Natural killer cell (primary cell): ENCODE measurements at regions of chr11 and their contacts with region 1.

Region 1: GRCh38 chr11:18768472-18768901 is 23.1 kb downstream of the PTPN5 start:
- DNase-seq: no peak
- ATAC-seq: no peak
- H3K4me3 ChIP-seq: no peak overlapping the region
- H3K4me3 Mint-ChIP-seq: no peak overlapping the region
- H3K27ac ChIP-seq: no peak overlapping the region
- H3K27ac Mint-ChIP-seq: no peak overlapping the region
- H3K4me1 ChIP-seq: no peaks in the 10 kb centered on the region
- H3K4me1 Mint-ChIP-seq: no peaks in the 10 kb centered on the region
- H3K27me3 ChIP-seq: no peaks in the 10 kb centered on the region
- H3K27me3 Mint-ChIP-seq: peaks cover 8% of the 10 kb centered on the region in 2 donors
- CTCF ChIP-seq: no peak

Region 2: GRCh38 chr11:18115360-18116127 is 652.9 kb before region 1 on chr11:
- intact Hi-C with region 1: loop called (anchors 1 kb)
- DNase-seq: peak; percentile 38 to 82
- ATAC-seq: peak; percentile 83 to 91 (median 84)
- H3K4me3 ChIP-seq: no peak overlapping the region
- H3K4me3 Mint-ChIP-seq: no peak overlapping the region
- H3K27ac ChIP-seq: no peak overlapping the region
- H3K27ac Mint-ChIP-seq: no peak overlapping the region
- H3K4me1 ChIP-seq: no peaks in the 10 kb centered on the region
- H3K4me1 Mint-ChIP-seq: peaks cover 0 to 5% of the 10 kb centered on the region in 2 donors
- H3K27me3 ChIP-seq: no peaks in the 10 kb centered on the region
- H3K27me3 Mint-ChIP-seq: peaks cover 20 to 41% of the 10 kb centered on the region in 2 donors
- CTCF ChIP-seq: peak; percentile 79

Region 3: DNA sequence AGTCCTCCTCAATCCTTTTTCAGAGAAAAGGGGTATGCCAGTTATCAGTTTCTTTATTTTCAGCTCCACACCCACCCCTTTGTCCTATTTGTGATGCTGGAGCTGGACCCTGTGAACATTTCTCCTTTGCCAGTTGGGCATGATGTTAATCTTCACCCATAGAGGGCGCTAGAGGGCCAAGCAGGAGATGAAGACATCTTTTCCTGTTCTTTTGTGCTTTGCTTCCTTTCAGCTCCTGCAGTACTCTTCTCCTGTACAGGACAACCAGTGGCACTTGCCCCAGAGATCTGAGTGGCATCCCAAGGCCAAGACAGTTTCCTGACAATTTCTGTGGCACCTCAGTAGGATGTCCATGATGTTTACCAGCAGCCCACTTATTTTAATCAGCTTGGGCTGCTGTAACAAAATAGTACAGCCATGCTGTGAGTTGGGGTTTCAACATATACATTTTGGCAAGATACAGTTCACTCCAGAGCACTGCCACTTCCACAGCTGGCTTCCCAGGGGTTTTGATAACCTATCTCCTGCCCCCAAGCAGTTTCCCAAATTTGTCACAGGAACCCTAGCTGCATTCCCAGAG is 524.6 kb before region 1 on chr11:
- intact Hi-C with region 1: loop called (anchors 2 kb)
- DNase-seq: peak; percentile 40 to 85
- ATAC-seq: peak; percentile 58 to 80 (median 76)
- H3K4me3 ChIP-seq: no peak overlapping the region
- H3K4me3 Mint-ChIP-seq: no peak overlapping the region
- H3K27ac ChIP-seq: no peak overlapping the region
- H3K27ac Mint-ChIP-seq: no peak overlapping the region
- H3K4me1 ChIP-seq: no peaks in the 10 kb centered on the region
- H3K4me1 Mint-ChIP-seq: no peaks in the 10 kb centered on the region
- H3K27me3 ChIP-seq: peaks cover 7% of the 10 kb centered on the region
- H3K27me3 Mint-ChIP-seq: peaks cover 22 to 33% of the 10 kb centered on the region in 2 donors
- CTCF ChIP-seq: peak; percentile 90

Region 4: GRCh38 chr11:18540207-18541009 is 228.1 kb before region 1 on chr11:
- intact Hi-C with region 1: loop called (anchors 10 kb)
- DNase-seq: peak in 1 of 2 donors; percentile 70
- ATAC-seq: peak in 2 of 3 donors; percentile 55 to 57
- H3K4me3 ChIP-seq: no peak overlapping the region
- H3K4me3 Mint-ChIP-seq: no peak overlapping the region
- H3K27ac ChIP-seq: no peak overlapping the region
- H3K27ac Mint-ChIP-seq: peak overlapping the region; percentile 11 to 65
- H3K4me1 ChIP-seq: no peaks in the 10 kb centered on the region
- H3K4me1 Mint-ChIP-seq: no peaks in the 10 kb centered on the region
- H3K27me3 ChIP-seq: no peaks in the 10 kb centered on the region
- H3K27me3 Mint-ChIP-seq: no peaks in the 10 kb centered on the region
- CTCF ChIP-seq: peak; percentile 58

Region 5: DNA sequence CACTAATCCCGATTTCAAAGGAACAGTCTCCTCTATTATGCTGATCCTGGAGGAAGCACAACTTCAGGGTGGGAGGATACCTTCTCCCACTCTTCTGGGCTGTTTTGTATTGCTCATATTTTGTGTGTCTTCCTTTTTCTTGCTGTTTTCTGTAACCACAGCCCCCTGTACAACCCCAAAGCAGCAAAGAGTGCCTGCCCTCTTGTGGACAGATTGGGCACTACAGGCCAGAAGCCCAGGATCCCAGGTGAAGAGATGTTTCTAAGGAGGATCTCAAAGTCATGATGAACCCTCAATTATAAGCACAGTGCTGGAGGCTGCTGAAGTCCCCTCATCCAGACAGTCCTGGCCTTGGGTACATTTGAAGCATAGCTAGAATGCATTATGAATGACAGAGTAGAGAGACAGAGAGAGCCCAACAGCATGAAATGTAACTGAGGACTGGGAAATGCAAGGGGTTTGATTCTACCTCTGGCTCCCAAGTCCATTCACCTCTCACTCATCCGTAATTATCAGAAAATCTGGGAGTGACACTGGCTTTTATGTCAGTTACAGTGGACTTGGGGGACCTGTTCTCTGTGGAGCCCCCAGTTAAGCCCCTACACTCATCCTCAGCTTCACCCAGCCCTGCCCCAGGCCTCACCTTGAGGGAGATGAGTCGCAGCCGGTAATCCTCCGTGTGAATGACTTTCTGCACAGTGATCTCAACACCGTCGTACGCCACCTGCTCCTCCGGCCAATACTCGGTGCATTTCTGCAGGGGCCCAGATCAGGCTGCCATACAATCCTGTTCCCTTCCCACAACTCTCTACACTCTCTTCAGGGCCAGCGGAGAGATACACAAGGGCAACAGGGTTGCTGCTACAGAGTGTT is 36.3 kb before region 1 on chr11:
- intact Hi-C with region 1: no loop called
- DNase-seq: peak; percentile 64 to 84
- ATAC-seq: peak; percentile 65 to 89 (median 81)
- H3K4me3 ChIP-seq: no peak overlapping the region
- H3K4me3 Mint-ChIP-seq: no peak overlapping the region
- H3K27ac ChIP-seq: no peak overlapping the region
- H3K27ac Mint-ChIP-seq: peak overlapping the region in 1 of 2 donors; percentile 28
- H3K4me1 ChIP-seq: no peaks in the 10 kb centered on the region
- H3K4me1 Mint-ChIP-seq: peaks cover 0 to 6% of the 10 kb centered on the region in 2 donors
- H3K27me3 ChIP-seq: no peaks in the 10 kb centered on the region
- H3K27me3 Mint-ChIP-seq: peaks cover 0 to 3% of the 10 kb centered on the region in 2 donors
- CTCF ChIP-seq: peak; percentile 98